AG04450 (cell line): ENCODE measurements at regions of chr5 and their contacts with region 1.

Region 1: GRCh38 chr5:59174248-59174844 is 591.5 kb downstream of the RAB3C start:
- DNase-seq: peak; percentile 70
- H3K4me3 ChIP-seq: no peak overlapping the region
- H3K27ac ChIP-seq: no peak overlapping the region
- H3K27me3 ChIP-seq: no peaks in the 10 kb centered on the region
- CTCF ChIP-seq: peak; percentile 98

Region 2: DNA sequence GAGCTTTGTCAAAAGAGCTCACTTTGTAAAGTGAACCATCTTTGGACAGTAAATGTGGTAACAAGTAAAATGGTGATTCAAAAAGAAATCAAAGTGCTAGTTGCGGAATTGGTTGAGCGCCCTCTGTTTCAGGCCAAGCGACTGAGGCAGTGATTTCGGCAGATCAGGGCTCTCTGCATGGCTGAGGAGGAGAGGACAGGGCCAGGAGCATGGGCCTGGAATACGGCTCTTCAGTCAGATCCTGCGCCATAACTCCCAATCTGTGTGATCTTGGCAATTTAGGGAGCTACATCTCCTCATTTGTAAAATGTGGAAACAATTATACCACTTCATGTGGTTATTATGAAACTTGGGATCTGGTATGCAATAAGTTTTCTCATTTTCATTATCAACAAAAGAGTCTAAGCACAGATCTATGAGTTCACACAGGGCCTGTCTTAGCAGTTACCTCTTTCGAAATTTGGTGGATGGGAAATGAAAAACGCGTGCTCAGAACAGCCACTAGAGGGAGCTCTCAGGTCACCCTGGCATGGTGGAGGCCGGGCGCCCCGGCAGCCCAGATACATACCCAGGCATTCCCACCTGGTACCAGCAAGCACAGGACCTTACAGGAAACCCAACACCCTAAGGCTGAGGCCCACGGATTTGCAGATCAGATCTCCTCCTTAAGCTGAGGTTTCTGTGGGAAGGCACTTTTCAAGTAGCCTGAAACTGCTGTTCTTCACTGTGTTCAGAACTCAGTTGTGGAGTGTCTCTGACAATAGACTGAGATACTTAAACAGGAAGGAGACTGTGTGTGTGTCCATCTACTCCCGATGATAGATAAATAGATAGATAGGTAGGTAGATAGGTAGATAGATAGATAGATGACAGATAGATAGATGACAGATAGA is 287.8 kb before region 1 on chr5:
- CTCF ChIA-PET with region 1: interaction called, 187 read pairs
- POLR2A ChIA-PET with region 1: no interaction called
- DNase-seq: peak; percentile 37
- H3K4me3 ChIP-seq: no peak overlapping the region
- H3K27ac ChIP-seq: no peak overlapping the region
- H3K27me3 ChIP-seq: no peaks in the 10 kb centered on the region
- CTCF ChIP-seq: peak; percentile 93

Region 3: GRCh38 chr5:58999804-59000595 is 174.3 kb before region 1 on chr5:
- CTCF ChIA-PET with region 1: interaction called, 50 read pairs
- POLR2A ChIA-PET with region 1: no interaction called
- DNase-seq: no peak
- H3K4me3 ChIP-seq: no peak overlapping the region
- H3K27ac ChIP-seq: no peak overlapping the region
- H3K27me3 ChIP-seq: no peaks in the 10 kb centered on the region
- CTCF ChIP-seq: no peak

Region 4: GRCh38 chr5:59027145-59027907 is 147.0 kb before region 1 on chr5:
- CTCF ChIA-PET with region 1: interaction called, 163 read pairs
- POLR2A ChIA-PET with region 1: no interaction called
- DNase-seq: no peak
- H3K4me3 ChIP-seq: no peak overlapping the region
- H3K27ac ChIP-seq: no peak overlapping the region
- H3K27me3 ChIP-seq: no peaks in the 10 kb centered on the region
- CTCF ChIP-seq: no peak

Region 5: DNA sequence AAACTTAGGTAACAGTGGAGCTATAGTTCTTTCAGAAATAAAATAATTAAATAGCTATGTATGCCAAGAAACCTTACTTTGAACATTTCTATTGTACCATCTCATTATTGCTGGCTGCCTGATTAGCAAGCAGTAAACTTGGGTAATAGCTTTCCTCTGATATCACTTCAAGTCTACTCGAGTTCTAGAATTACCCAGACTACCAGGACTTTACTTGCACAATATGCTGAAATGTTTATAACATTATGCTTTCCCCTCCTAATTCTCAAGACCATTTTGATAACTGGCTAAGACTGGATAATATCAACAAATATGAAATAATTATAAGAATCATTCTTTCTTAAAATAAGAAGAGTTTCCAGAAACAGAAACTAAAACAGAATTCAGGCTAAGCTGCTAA is 78.9 kb before region 1 on chr5:
- CTCF ChIA-PET with region 1: interaction called, 13 read pairs
- POLR2A ChIA-PET with region 1: no interaction called
- DNase-seq: peak; percentile 29
- H3K4me3 ChIP-seq: no peak overlapping the region
- H3K27ac ChIP-seq: no peak overlapping the region
- H3K27me3 ChIP-seq: no peaks in the 10 kb centered on the region
- CTCF ChIP-seq: no peak

Region 6: DNA sequence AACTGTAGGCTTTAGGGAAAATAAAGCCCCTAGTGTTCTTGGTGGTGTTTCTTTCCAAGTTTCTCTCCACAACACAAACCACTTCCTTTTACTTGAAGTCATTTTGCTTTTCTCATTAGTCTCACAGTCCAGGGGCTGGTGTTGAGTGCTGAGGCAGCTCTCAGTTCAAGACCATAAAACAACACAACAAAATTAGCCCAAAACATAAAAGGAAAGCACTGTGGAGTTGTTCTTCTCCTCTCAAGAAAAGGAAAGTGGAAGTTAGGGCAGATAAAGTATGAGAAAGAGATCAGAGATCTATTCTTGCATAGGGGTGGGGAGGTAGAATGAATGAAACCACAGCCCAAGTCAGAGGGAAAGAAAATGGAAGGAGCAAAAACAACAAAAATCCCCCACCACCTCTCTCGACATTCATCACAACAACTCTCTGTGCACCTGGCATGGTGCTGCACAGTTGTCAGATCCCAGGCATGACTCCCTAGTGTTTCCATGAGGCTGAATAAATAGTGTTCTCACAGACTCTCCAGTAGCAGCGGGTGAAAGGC is 21.6 kb before region 1 on chr5:
- CTCF ChIA-PET with region 1: interaction called, 18 read pairs
- POLR2A ChIA-PET with region 1: no interaction called
- DNase-seq: no peak
- H3K4me3 ChIP-seq: no peak overlapping the region
- H3K27ac ChIP-seq: no peak overlapping the region
- H3K27me3 ChIP-seq: no peaks in the 10 kb centered on the region
- CTCF ChIP-seq: no peak

Region 7: DNA sequence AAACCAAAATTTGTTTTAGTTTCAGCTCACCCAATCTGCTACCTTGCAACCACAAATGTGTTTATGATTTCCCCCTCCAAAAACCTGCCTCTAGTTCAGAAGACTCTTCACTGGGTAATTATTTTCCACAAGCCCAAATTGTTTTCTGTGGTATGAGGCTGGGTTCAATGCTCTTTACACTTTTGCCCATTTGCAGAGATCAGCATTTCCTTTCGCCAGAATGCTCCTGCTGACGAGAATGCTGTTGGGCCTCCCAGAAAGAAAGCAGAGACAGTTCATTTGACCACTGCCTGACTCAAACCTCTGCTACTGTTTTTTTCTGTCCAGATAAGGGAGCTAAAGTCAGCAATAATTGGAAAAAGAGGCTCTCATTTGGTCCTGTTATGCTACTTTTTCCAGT is 291.9 kb after region 1 on chr5:
- CTCF ChIA-PET with region 1: no interaction called
- POLR2A ChIA-PET with region 1: no interaction called
- DNase-seq: no peak
- H3K4me3 ChIP-seq: no peak overlapping the region
- H3K27ac ChIP-seq: no peak overlapping the region
- H3K27me3 ChIP-seq: no peaks in the 10 kb centered on the region
- CTCF ChIP-seq: no peak

Region 8: DNA sequence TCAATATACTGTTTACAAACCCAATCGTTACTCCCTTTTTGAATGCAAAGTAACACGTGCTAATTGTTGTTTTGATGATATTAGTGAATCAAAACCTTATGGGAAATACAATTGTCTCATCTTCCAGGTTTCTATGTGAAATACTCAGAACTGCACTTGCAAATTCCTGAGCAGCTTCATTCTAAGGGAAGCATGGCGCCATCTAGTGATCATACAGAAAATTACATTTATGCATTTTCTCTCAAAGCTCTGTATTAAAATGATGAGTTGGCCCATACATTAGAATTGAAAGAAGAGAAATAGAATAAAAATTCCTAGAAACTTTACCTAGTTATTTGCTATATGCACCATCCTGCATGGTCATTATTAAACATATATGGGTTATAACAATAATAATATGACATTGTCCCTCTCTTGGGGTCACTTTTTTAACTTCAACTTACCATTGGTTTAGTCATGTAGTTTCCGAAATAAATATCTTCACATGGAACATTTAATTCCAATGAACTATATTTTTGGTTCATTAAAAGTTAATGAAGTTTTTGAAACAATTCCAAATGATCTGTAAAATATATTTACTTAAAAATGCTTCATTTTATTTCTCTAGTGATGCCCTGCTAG is 499.2 kb after region 1 on chr5:
- CTCF ChIA-PET with region 1: interaction called, 11 read pairs
- POLR2A ChIA-PET with region 1: no interaction called
- DNase-seq: no peak
- H3K4me3 ChIP-seq: no peak overlapping the region
- H3K27ac ChIP-seq: no peak overlapping the region
- H3K27me3 ChIP-seq: no peaks in the 10 kb centered on the region
- CTCF ChIP-seq: peak; percentile 80